K562 (cell line): ENCODE measurements at regions of chr12 and their contacts with region 1.

Region 1: GRCh38 chr12:89470741-89471509 is 53.7 kb downstream of the GALNT4 start:
- DNase-seq: peak; percentile 34 to 68 (median 41)
- ATAC-seq: peak; percentile 95
- H3K4me3 ChIP-seq: no peak overlapping the region
- H3K27ac ChIP-seq: no peak overlapping the region
- H3K4me1 ChIP-seq: no peaks in the 10 kb centered on the region; a peak in 1 of 5 replicates
- H3K27me3 ChIP-seq: no peaks in the 10 kb centered on the region
- CTCF ChIP-seq: peak; percentile 37 to 81 (median 63); a peak in 5 of 6 replicates
- EP300 ChIP-seq: no peak
- POLR2A ChIP-seq: no peak
- RAD21 ChIP-seq: peak; percentile 77 to 88

Region 2: DNA sequence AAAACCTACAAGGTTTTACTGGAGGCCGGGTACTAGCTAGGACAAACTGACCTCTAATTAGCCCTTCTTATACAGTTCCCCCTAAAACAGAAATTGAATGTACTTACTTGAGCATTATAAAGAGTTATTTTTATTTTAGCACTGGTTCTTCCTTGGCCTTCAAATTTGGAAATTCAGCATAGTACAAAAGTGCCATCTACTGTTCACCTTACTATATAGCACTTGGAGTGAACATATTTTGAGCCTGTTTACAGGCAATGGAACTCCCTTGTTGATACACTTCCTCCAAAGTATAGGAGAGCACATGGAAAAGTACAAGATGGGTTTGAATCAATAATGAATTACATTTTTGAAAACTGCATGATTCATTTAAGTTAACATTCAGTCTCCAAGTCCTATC is 58.8 kb after region 1 on chr12:
- CTCF ChIA-PET with region 1: interaction called, 17 read pairs
- POLR2A ChIA-PET with region 1: no interaction called
- in situ Hi-C with region 1: loop called (anchors 5 kb)
- intact Hi-C with region 1: loop called (anchors 1 kb)
- DNase-seq: peak; percentile 39 to 60 (median 46)
- ATAC-seq: peak; percentile 26; the same call in 2 of the 3 replicates
- H3K4me3 ChIP-seq: no peak overlapping the region
- H3K27ac ChIP-seq: no peak overlapping the region
- H3K4me1 ChIP-seq: peaks cover 0 to 15% of the 10 kb centered on the region in 2 experiments; a peak in 3 of 5 replicates
- H3K27me3 ChIP-seq: no peaks in the 10 kb centered on the region
- CTCF ChIP-seq: peak; percentile 64 to 82 (median 66); a peak in 5 of 6 replicates
- EP300 ChIP-seq: no peak
- POLR2A ChIP-seq: no peak
- RAD21 ChIP-seq: peak; percentile 92 to 94

Region 3: GRCh38 chr12:89695100-89695499 is 224.2 kb after region 1 on chr12:
- CTCF ChIA-PET with region 1: no interaction called
- POLR2A ChIA-PET with region 1: no interaction called
- in situ Hi-C with region 1: no loop called
- intact Hi-C with region 1: loop called (anchors 10 kb)
- DNase-seq: no peak
- ATAC-seq: peak; percentile 34
- H3K4me3 ChIP-seq: no peak overlapping the region
- H3K27ac ChIP-seq: no peak overlapping the region
- H3K4me1 ChIP-seq: peaks cover 0 to 21% of the 10 kb centered on the region in 2 experiments; a peak in 3 of 5 replicates
- H3K27me3 ChIP-seq: no peaks in the 10 kb centered on the region
- CTCF ChIP-seq: no peak
- EP300 ChIP-seq: no peak
- POLR2A ChIP-seq: no peak
- RAD21 ChIP-seq: no peak

Region 4: GRCh38 chr12:90940872-90941499 is 1470.1 kb after region 1 on chr12:
- CTCF ChIA-PET with region 1: no interaction called
- POLR2A ChIA-PET with region 1: no interaction called
- in situ Hi-C with region 1: loop called (anchors 25 kb)
- intact Hi-C with region 1: loop called (anchors 10 kb)
- DNase-seq: peak in 3 of 4 experiments; percentile 11 to 40 (median 20)
- ATAC-seq: peak; percentile 84
- H3K4me3 ChIP-seq: no peak overlapping the region
- H3K27ac ChIP-seq: no peak overlapping the region
- H3K4me1 ChIP-seq: no peaks in the 10 kb centered on the region
- H3K27me3 ChIP-seq: no peaks in the 10 kb centered on the region
- CTCF ChIP-seq: peak; percentile 36 to 67 (median 42); a peak in 5 of 6 replicates
- EP300 ChIP-seq: no peak
- POLR2A ChIP-seq: no peak
- RAD21 ChIP-seq: peak; percentile 44 to 66